AG04449 (cell line): ENCODE measurements at regions of chr1 and their contacts with region 1.

Region 1: GRCh38 chr1:31715087-31715872 is 11.5 kb upstream of the COL16A1 start:
- DNase-seq: no peak
- H3K4me3 ChIP-seq: peak overlapping the region; percentile 45
- CTCF ChIP-seq: peak; percentile 92

Region 2: GRCh38 chr1:31663622-31664452 is 51.4 kb before region 1 on chr1:
- CTCF ChIA-PET with region 1: interaction called, 92 read pairs
- POLR2A ChIA-PET with region 1: no interaction called
- DNase-seq: no peak
- H3K4me3 ChIP-seq: no peak overlapping the region
- CTCF ChIP-seq: peak; percentile 86

Region 3: DNA sequence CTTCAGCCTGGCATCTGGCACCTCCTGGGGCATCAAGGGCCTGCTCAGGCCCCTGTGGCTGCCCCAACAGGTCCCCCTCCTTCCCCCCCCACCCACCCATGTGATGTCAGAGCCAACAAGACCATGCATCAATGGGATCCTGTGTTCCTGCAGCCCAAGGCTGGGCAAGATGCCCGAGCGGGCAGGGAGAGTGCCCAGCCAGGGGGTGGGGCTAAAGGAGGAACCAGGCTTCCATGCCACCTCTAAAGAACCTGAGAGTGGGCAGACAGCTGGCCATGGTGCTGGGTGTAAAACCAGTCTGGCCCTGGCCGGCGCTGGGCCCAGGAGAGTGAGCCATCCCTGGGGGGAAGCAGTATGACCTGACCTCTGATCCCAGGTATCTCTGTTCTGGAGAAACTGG is 19.0 kb before region 1 on chr1:
- CTCF ChIA-PET with region 1: interaction called, 117 read pairs
- POLR2A ChIA-PET with region 1: interaction called, 101 read pairs
- DNase-seq: no peak
- H3K4me3 ChIP-seq: no peak overlapping the region
- CTCF ChIP-seq: no peak

Region 4: DNA sequence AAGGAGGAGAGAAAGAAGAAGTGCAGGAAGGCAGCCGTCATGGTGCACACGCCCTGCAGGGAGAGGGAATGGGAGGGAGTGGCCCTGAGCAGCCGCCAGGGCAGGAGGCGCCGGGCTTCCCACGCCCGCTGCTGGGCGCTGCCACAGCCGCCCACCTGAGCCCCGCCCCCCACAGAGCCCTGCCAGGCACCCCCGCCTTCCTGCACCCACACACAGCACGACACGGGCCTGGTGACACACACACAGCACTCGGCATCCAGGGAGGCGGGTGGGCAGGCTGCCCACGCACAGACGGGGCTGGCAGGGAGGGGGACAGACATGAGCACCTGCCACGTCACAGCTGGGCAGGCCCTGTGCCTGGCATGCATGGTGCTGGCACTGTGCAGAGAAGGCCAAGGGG is 21.4 kb after region 1 on chr1:
- CTCF ChIA-PET with region 1: interaction called, 87 read pairs
- POLR2A ChIA-PET with region 1: interaction called, 3 read pairs
- DNase-seq: no peak
- H3K4me3 ChIP-seq: no peak overlapping the region
- CTCF ChIP-seq: no peak

Region 5: GRCh38 chr1:31762726-31763670 is 47.7 kb after region 1 on chr1:
- CTCF ChIA-PET with region 1: interaction called, 41 read pairs
- POLR2A ChIA-PET with region 1: interaction called, 3 read pairs
- DNase-seq: no peak
- H3K4me3 ChIP-seq: peak overlapping the region; percentile 70
- CTCF ChIP-seq: peak; percentile 82